ENCODE measurements at regions of chr3 and their contacts with region 1.

Region 1: DNA sequence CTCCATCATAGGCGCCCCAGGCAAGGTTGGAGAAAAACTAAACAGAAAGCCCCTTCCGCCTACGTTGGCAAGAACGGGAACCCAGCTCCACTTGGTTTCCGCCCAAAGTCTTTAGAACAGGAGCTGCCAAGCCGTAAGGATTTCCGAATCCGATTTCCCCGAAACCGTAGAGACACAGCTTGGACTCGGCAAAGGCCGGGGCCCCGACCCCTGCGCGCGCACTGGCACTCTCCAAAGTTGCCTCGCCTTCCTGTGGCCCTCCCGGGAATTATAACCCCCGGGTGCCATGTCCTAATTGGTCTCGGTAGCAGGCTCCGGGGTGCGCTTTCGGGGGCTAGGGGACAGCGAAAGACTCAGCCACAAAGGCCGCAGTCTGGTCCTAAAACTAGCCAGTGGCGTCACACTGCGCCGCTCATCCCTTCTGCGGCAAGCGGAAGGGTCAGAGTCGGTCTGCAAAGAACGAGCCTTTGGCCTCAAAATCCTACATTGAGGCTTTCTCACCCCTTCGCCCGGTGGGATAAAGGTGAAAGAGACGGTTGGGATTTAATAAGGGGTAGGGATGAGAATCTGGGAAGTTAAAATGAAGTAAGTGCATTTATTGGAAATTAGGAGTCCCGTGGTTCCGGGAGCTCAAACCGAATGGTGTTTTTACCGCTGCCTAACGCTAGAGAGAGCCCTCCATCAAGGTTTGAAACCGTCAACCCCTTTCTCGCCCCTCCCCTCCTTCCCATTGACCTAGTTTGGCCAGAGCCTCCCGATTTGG is 6.8 kb downstream of the BCL6 start:
- DNase-seq: peak; percentile 87
- H3K4me3 ChIP-seq: peak overlapping the region; percentile 51 to 94
- H3K27ac ChIP-seq: peak overlapping the region; percentile 50 to 97; a peak in 3 of 4 replicates
- H3K4me1 ChIP-seq: peaks cover 31 to 32% of the 10 kb centered on the region in 2 experiments; a peak in 3 of 4 replicates
- H3K27me3 ChIP-seq: no peaks in the 10 kb centered on the region
- CTCF ChIP-seq: peak; percentile 83
- EP300 ChIP-seq: 0 out of 4 replicates have a peak, but pooled peaks of 1 of the 2 experiments have one; percentile 5
- RAD21 ChIP-seq: peak; percentile 88

Region 2: DNA sequence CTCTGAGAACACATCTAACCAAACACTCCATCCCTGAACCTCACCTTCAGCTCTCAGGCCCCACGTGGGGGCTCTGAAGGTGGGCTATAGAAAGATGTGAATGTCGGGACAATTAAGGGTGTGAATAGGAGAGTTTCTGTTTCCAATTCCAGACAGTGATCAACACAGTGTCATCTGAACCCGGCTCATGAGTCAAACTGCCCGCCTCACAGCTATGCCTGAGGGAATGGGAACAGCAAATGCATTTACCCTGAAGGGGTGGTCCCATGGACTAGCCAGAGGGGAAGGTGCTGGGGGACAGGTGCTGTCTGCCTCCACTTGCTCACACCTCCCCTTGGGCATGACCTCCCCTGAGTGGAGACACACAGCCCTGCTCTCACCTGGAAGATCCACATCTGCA is 42.5 kb before region 1 on chr3:
- CTCF ChIA-PET with region 1: no interaction called
- POLR2A ChIA-PET with region 1: no interaction called
- DNase-seq: no peak
- H3K4me3 ChIP-seq: no peak overlapping the region
- H3K27ac ChIP-seq: no peak overlapping the region
- H3K4me1 ChIP-seq: no peaks in the 10 kb centered on the region
- H3K27me3 ChIP-seq: peaks cover 43% of the 10 kb centered on the region; the same call in 1 of the 2 replicates
- CTCF ChIP-seq: no peak
- EP300 ChIP-seq: no peak
- RAD21 ChIP-seq: no peak

Region 3: GRCh38 chr3:187725653-187726370 is 12.7 kb before region 1 on chr3:
- CTCF ChIA-PET with region 1: interaction called, 66 read pairs
- POLR2A ChIA-PET with region 1: no interaction called
- DNase-seq: no peak
- H3K4me3 ChIP-seq: no peak overlapping the region
- H3K27ac ChIP-seq: no peak overlapping the region
- H3K4me1 ChIP-seq: no peaks in the 10 kb centered on the region; a peak in 1 of 4 replicates
- H3K27me3 ChIP-seq: no peaks in the 10 kb centered on the region
- CTCF ChIP-seq: no peak
- EP300 ChIP-seq: no peak
- RAD21 ChIP-seq: no peak

Region 4: GRCh38 chr3:187767266-187768012 is 28.9 kb after region 1 on chr3:
- CTCF ChIA-PET with region 1: interaction called, 17 read pairs
- POLR2A ChIA-PET with region 1: no interaction called
- DNase-seq: no peak
- H3K4me3 ChIP-seq: no peak overlapping the region
- H3K27ac ChIP-seq: peak overlapping the region in 1 of 2 experiments; percentile 81; a peak in 2 of 4 replicates
- H3K4me1 ChIP-seq: peaks cover 3 to 4% of the 10 kb centered on the region in 2 experiments; a peak in 2 of 4 replicates
- H3K27me3 ChIP-seq: no peaks in the 10 kb centered on the region
- CTCF ChIP-seq: no peak
- EP300 ChIP-seq: peak in 1 of 2 experiments; percentile 49; a peak in 2 of 4 replicates
- RAD21 ChIP-seq: no peak

Region 5: GRCh38 chr3:188954590-188955208 is 1216.2 kb after region 1 on chr3:
- CTCF ChIA-PET with region 1: interaction called, 71 read pairs
- POLR2A ChIA-PET with region 1: no interaction called
- DNase-seq: peak; percentile 52
- H3K4me3 ChIP-seq: peak overlapping the region in 1 of 2 experiments; percentile 26; a peak in 1 of 4 replicates
- H3K27ac ChIP-seq: peak overlapping the region in 1 of 2 experiments; percentile 14; a peak in 1 of 4 replicates
- H3K4me1 ChIP-seq: peaks cover 2 to 13% of the 10 kb centered on the region in 2 experiments; a peak in 3 of 4 replicates
- H3K27me3 ChIP-seq: no peaks in the 10 kb centered on the region
- CTCF ChIP-seq: peak; percentile 97
- EP300 ChIP-seq: no peak
- RAD21 ChIP-seq: peak; percentile 88

Region 6: GRCh38 chr3:189160536-189161269 is 1422.2 kb after region 1 on chr3:
- CTCF ChIA-PET with region 1: interaction called, 17 read pairs
- POLR2A ChIA-PET with region 1: no interaction called
- DNase-seq: no peak
- H3K4me3 ChIP-seq: no peak overlapping the region
- H3K27ac ChIP-seq: no peak overlapping the region
- H3K4me1 ChIP-seq: no peaks in the 10 kb centered on the region
- H3K27me3 ChIP-seq: peaks cover 7% of the 10 kb centered on the region; the same call in 1 of the 2 replicates
- CTCF ChIP-seq: no peak
- EP300 ChIP-seq: no peak
- RAD21 ChIP-seq: no peak

Region 7: GRCh38 chr3:189233225-189233858 is 1494.8 kb after region 1 on chr3:
- CTCF ChIA-PET with region 1: interaction called, 131 read pairs
- POLR2A ChIA-PET with region 1: no interaction called
- DNase-seq: peak; percentile 42
- H3K4me3 ChIP-seq: no peak overlapping the region; a peak in 1 of 4 replicates
- H3K27ac ChIP-seq: no peak overlapping the region
- H3K4me1 ChIP-seq: no peaks in the 10 kb centered on the region
- H3K27me3 ChIP-seq: peaks cover 9% of the 10 kb centered on the region; the same call in 1 of the 2 replicates
- CTCF ChIP-seq: peak; percentile 77
- EP300 ChIP-seq: no peak
- RAD21 ChIP-seq: peak; percentile 79

Measured in SK-N-SH (cell line).